GM12878 (cell line): ENCODE measurements at regions of chr9 and their contacts with region 1.

Region 1: DNA sequence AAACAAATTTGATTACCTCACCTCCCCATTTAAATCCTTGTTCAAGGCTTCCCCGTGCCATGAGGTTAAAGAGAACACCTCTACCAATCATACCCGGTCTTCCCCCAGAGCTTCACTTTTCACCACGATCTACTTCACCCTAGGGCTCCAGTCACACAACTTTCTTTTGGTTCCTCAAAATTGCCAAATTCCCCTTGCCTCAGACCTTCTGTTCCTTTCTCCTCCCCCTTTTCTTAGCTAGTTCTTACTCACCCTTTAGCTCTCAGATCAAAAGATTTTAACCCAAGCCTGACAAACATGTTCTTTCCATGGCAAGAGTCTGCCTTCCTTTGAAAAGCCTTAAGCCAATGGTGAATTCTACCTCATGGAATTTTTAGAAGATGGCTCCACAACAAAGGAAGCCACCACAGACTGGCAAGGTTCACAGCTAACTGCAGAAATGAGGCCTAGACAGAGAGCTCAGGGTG is 56.7 kb downstream of the MAPKAP1 start:
- DNase-seq: peak; percentile 96
- ATAC-seq: peak; percentile 84
- H3K4me3 ChIP-seq: peak overlapping the region; percentile 53; the same call in 1 of the 2 replicates
- H3K27ac ChIP-seq: peak overlapping the region; percentile 95
- H3K4me1 ChIP-seq: peaks cover 59% of the 10 kb centered on the region
- H3K27me3 ChIP-seq: no peaks in the 10 kb centered on the region
- CTCF ChIP-seq: no peak
- EP300 ChIP-seq: peak; percentile 96 to 97
- POLR2A ChIP-seq: 0 out of 2 replicates have a peak, but pooled peaks have one; percentile 24
- RAD21 ChIP-seq: no peak

Region 2: GRCh38 chr9:125638239-125639045 is 11.9 kb before region 1 on chr9:
- CTCF ChIA-PET with region 1: interaction called, 29 read pairs
- POLR2A ChIA-PET with region 1: interaction called, 68 read pairs
- RAD21 ChIA-PET with region 1: interaction called, 237 read pairs
- SMC1A ChIA-PET with region 1: interaction called, 251 read pairs
- in situ Hi-C with region 1: no loop called
- intact Hi-C with region 1: no loop called
- DNase-seq: no peak
- ATAC-seq: no peak
- H3K4me3 ChIP-seq: no peak overlapping the region
- H3K27ac ChIP-seq: peak overlapping the region; percentile 73
- H3K4me1 ChIP-seq: peaks cover 82% of the 10 kb centered on the region
- H3K27me3 ChIP-seq: no peaks in the 10 kb centered on the region
- CTCF ChIP-seq: no peak
- EP300 ChIP-seq: no peak
- POLR2A ChIP-seq: no peak
- RAD21 ChIP-seq: no peak

Region 3: DNA sequence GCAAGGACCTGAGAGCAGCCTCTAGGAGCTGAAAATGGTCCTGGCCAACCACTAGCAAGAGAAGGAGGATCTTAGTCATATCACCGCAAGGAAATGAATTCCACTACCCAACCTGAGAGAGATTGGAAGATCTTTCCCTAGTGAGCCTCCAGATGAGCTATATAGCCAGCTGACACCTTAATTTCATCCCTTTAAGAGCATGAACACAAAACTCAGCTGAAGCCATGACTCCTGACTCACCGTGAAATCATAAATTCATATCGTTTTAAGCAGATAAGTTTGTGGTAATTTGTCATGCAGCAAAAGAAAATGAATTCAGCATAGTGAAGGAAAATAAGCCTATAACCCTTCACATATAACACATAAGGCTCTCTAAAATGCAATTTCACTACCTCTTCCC is 33.2 kb after region 1 on chr9:
- CTCF ChIA-PET with region 1: interaction called, 5 read pairs
- POLR2A ChIA-PET with region 1: interaction called, 7 read pairs
- RAD21 ChIA-PET with region 1: interaction called, 8 read pairs
- SMC1A ChIA-PET with region 1: interaction called, 30 read pairs
- in situ Hi-C with region 1: no loop called
- intact Hi-C with region 1: no loop called
- DNase-seq: no peak
- ATAC-seq: no peak
- H3K4me3 ChIP-seq: no peak overlapping the region
- H3K27ac ChIP-seq: no peak overlapping the region
- H3K4me1 ChIP-seq: peaks cover 19% of the 10 kb centered on the region; the same call in 1 of the 2 replicates
- H3K27me3 ChIP-seq: no peaks in the 10 kb centered on the region
- CTCF ChIP-seq: no peak
- EP300 ChIP-seq: no peak
- POLR2A ChIP-seq: no peak
- RAD21 ChIP-seq: no peak

Region 4: DNA sequence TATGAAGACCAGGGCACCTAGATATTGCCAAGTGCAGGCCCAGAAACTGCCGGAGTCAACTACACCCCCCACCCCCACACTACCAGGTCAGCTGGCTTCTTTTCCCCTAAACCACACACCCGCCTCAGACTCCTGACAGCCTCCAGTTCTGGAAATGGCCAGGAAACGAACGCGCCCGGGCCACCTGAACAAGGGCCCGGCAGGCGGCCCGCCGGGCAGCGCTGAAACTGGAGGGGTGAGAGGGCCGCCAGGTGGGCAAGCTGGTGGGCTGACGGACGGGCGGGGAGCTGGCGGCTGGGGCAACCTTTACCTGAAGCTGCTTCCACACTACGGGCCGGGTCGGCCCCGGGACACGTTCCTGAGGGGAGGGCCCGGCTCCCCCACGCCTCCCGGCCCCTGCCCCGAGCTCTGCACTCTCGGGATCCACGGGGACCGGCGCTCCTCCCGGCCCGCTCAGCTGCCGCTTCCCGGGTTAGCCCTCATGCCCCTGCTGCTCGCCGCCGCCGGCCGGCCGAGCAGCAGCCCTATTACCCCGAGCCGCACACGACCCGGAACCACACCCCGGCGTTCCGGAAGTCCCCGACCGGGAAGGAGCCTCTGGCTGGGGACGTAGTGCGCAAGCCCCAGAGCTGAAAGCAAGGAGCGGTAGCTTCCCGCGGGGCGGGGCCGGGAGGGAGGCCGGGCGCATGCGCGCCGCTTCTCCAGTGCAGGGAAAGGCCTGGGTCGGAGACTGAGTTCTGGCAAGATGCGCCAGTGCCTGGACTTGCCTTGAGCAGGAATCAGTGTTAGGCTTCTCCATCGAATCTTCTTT is 56.6 kb after region 1 on chr9 and contains the start of gene MAPKAP1:
- CTCF ChIA-PET with region 1: interaction called, 11 read pairs
- POLR2A ChIA-PET with region 1: interaction called, 105 read pairs
- RAD21 ChIA-PET with region 1: interaction called, 119 read pairs
- SMC1A ChIA-PET with region 1: interaction called, 185 read pairs
- in situ Hi-C with region 1: no loop called
- intact Hi-C with region 1: loop called (anchors 1 kb)
- DNase-seq: peak; percentile 81
- ATAC-seq: peak; percentile 94
- H3K4me3 ChIP-seq: peak within 1 kb of the TSS; percentile 90
- H3K27ac ChIP-seq: peak within 1 kb of the TSS; percentile 69
- H3K4me1 ChIP-seq: peaks cover 17% of the 10 kb centered on the region
- H3K27me3 ChIP-seq: no peaks in the 10 kb centered on the region
- CTCF ChIP-seq: no peak
- EP300 ChIP-seq: no peak
- POLR2A ChIP-seq: peak; percentile 95
- RAD21 ChIP-seq: no peak
- polyA plus RNA-seq, gene MAPKAP1: 5.1 to 11.7 TPM

Region 5: DNA sequence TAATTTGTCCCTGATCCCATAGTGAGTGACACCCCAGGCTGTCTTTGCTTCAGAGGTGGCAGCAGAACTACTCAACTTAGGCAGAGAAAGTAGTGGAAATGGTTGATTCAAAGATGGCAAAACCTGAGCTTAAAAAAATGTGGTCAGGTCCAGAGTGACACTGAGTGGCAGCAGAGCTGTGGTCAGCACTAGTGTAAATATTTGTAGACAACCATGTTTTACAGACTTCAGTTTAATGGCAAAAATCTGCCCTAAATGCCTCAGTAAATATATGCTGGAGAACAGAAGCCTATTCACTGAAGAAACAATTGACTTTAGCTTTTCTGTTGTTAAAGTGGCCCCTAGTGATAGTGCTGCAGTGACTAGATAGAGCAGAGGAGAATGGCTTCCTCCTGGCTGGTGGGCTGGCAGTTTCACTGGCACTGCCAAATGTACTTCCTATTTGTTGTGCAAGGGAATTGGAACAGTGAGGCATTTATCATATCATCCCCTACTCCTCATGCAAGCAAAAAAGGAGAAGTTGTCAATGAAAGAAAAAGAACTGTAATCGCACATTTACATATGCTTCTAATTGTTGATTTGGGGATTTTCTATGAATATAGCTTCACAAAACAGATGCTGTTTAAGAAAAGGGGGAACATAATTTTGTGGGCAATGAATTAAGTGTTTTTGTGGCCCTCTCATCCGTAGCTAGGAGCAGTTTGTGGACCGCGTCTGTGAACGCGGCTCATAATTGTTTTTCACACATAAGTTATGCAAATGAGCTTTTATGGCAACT is 108.9 kb after region 1 on chr9:
- CTCF ChIA-PET with region 1: interaction called, 5 read pairs
- POLR2A ChIA-PET with region 1: interaction called, 10 read pairs
- RAD21 ChIA-PET with region 1: interaction called, 10 read pairs
- SMC1A ChIA-PET with region 1: interaction called, 7 read pairs
- in situ Hi-C with region 1: loop called (anchors 5 kb)
- intact Hi-C with region 1: loop called (anchors 5 kb)
- DNase-seq: no peak
- ATAC-seq: peak; percentile 53
- H3K4me3 ChIP-seq: peak overlapping the region; percentile 49
- H3K27ac ChIP-seq: peak overlapping the region; percentile 4; the same call in 1 of the 2 replicates
- H3K4me1 ChIP-seq: peaks cover 7% of the 10 kb centered on the region; the same call in 1 of the 2 replicates
- H3K27me3 ChIP-seq: no peaks in the 10 kb centered on the region
- CTCF ChIP-seq: no peak; a peak in 1 of 6 replicates
- EP300 ChIP-seq: no peak
- POLR2A ChIP-seq: no peak
- RAD21 ChIP-seq: no peak